ENCODE measurements at regions of chr6 and their contacts with region 1.

Region 1: GRCh38 chr6:41306187-41306854 is 19.8 kb upstream of the TREM1 start:
- DNase-seq: peak; percentile 73
- H3K4me3 Mint-ChIP-seq: no peak overlapping the region
- H3K27ac Mint-ChIP-seq: no peak overlapping the region
- H3K4me1 Mint-ChIP-seq: peaks cover 18% of the 10 kb centered on the region
- H3K27me3 Mint-ChIP-seq: no peaks in the 10 kb centered on the region

Region 2: GRCh38 chr6:40807484-40807883 is 498.8 kb before region 1 on chr6:
- CTCF ChIA-PET with region 1: no interaction called
- intact Hi-C with region 1: no loop called
- DNase-seq: no peak
- H3K4me3 Mint-ChIP-seq: no peak overlapping the region
- H3K27ac Mint-ChIP-seq: no peak overlapping the region
- H3K4me1 Mint-ChIP-seq: no peaks in the 10 kb centered on the region
- H3K27me3 Mint-ChIP-seq: no peaks in the 10 kb centered on the region

Region 3: DNA sequence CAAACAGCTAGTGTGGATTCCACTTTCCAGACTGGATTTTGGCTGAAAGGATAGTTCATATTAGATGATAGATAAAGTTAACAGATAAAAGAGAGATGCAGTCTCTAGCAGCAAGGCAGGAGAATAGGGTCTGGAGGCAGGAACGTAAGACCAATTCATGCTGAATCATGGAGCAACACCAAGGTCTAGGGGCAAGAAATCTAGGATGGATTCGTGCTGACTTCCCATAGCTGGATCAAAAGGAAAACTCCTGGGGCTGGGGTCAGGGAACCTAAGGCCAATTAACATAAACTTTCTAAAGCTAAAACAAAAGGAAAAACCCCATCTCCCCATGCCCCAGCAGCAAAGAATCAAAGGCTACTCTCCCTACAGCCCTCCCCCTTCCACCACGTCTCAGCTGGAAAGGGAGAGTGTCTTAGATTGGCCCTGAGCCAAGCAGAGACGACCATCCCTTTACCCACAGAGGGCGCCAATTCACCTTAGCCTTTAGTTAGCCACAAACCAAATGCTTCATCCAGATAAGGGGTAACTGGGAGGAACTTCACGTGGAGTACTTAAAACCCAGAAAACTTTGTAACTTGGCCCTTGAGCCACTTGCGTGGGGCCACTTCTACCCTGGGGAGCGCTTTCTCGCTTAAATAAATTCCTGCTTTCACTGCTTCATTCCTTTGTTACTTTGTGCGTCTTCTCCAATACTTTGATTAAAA is 27.5 kb before region 1 on chr6:
- CTCF ChIA-PET with region 1: interaction called, 23 read pairs
- intact Hi-C with region 1: loop called (anchors 1 kb)
- DNase-seq: peak; percentile 89
- H3K4me3 Mint-ChIP-seq: no peak overlapping the region
- H3K27ac Mint-ChIP-seq: peak overlapping the region; percentile 20
- H3K4me1 Mint-ChIP-seq: peaks cover 14% of the 10 kb centered on the region
- H3K27me3 Mint-ChIP-seq: no peaks in the 10 kb centered on the region

Region 4: DNA sequence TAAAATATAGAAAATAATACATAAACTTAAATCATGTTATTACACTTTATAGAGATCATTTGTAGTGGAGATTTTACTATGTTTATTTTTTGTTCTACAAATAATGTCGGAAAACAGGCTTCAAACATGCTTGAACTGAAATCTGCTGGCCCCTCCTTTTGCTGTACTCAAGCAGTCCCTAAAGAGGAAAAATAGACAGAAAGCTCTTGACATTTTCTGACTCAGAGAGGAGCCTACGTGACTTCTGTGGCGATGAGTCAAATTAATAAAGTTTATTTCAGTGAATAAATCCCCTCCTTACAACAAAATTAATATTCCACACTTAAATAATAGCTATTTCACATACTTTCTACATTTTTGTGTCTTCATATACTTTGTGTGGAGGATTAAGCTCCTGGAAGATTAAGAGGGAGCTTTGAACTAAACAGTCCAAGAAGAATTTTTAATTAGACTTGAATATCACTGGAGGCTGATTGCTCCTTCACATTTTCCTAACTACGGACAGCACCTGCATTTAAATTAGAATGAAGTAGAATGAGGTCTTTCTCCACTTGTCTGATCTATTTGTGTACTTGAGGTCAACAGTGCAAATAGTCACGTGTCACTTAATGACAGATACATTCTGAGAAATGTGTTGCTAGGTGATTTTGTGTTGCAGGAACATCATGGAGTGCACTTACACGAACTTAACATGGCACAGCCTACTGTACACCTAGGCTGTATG is 18.1 kb before region 1 on chr6:
- CTCF ChIA-PET with region 1: interaction called, 7 read pairs
- intact Hi-C with region 1: loop called (anchors 2 kb)
- DNase-seq: peak; percentile 24
- H3K4me3 Mint-ChIP-seq: no peak overlapping the region
- H3K27ac Mint-ChIP-seq: peak overlapping the region; percentile 86
- H3K4me1 Mint-ChIP-seq: peaks cover 23% of the 10 kb centered on the region
- H3K27me3 Mint-ChIP-seq: no peaks in the 10 kb centered on the region

Region 5: GRCh38 chr6:41334482-41335040 is 28.2 kb after region 1 on chr6:
- CTCF ChIA-PET with region 1: interaction called, 14 read pairs
- intact Hi-C with region 1: no loop called
- DNase-seq: peak; percentile 30
- H3K4me3 Mint-ChIP-seq: no peak overlapping the region
- H3K27ac Mint-ChIP-seq: peak overlapping the region; percentile 78
- H3K4me1 Mint-ChIP-seq: peaks cover 46% of the 10 kb centered on the region
- H3K27me3 Mint-ChIP-seq: no peaks in the 10 kb centered on the region

Region 6: GRCh38 chr6:41392246-41392645 is 85.9 kb after region 1 on chr6:
- CTCF ChIA-PET with region 1: no interaction called
- intact Hi-C with region 1: no loop called
- DNase-seq: no peak
- H3K4me3 Mint-ChIP-seq: no peak overlapping the region
- H3K27ac Mint-ChIP-seq: no peak overlapping the region
- H3K4me1 Mint-ChIP-seq: no peaks in the 10 kb centered on the region
- H3K27me3 Mint-ChIP-seq: peaks cover 16% of the 10 kb centered on the region

Region 7: DNA sequence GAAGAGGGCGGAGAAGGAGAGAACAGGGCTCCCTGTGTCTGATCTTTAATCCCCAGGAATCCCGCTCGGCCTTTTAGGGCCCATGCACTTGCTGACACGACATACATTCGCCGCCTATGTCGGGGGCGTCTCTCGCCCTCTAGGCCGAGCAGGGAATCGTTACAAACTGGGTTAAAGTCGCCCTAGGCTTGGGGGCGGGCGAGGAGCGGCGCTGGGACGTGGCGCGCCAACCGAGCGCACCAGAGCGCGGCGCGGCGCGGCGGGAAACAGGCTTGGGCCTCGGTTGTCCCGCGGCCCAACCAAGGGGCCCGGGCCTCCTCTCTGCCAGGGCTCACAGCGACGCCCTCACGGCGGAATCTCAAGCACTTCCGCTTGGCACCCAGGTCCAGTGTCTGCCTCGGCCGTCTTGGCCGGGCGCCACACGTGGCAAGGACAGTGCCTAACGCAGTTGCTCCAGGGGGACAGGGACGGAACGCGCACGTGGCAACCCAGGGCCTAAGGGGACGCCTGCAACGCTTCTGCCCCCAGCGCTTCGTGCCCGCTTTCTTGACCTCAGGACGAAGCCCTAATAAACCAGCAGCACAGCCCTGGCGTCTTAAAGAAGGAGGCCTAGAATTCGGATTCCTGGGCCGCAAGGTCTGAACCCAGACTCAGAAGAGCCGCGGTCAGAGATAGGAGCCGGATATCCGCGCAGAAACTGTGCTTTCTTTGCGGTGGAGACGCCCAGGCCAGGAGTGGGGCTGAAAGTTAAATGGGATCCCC is 100.6 kb after region 1 on chr6:
- CTCF ChIA-PET with region 1: no interaction called
- intact Hi-C with region 1: no loop called
- DNase-seq: no peak
- H3K4me3 Mint-ChIP-seq: no peak overlapping the region
- H3K27ac Mint-ChIP-seq: no peak overlapping the region
- H3K4me1 Mint-ChIP-seq: no peaks in the 10 kb centered on the region
- H3K27me3 Mint-ChIP-seq: peaks cover 10% of the 10 kb centered on the region

Region 8: GRCh38 chr6:41568585-41569384 is 262.5 kb after region 1 on chr6:
- CTCF ChIA-PET with region 1: no interaction called
- intact Hi-C with region 1: no loop called
- DNase-seq: no peak
- H3K4me3 Mint-ChIP-seq: no peak overlapping the region
- H3K27ac Mint-ChIP-seq: no peak overlapping the region
- H3K4me1 Mint-ChIP-seq: peaks cover 16% of the 10 kb centered on the region
- H3K27me3 Mint-ChIP-seq: no peaks in the 10 kb centered on the region

Region 9: GRCh38 chr6:41591859-41592502 is 285.7 kb after region 1 on chr6:
- CTCF ChIA-PET with region 1: no interaction called
- intact Hi-C with region 1: loop called (anchors 5 kb)
- DNase-seq: peak; percentile 89
- H3K4me3 Mint-ChIP-seq: no peak overlapping the region
- H3K27ac Mint-ChIP-seq: no peak overlapping the region
- H3K4me1 Mint-ChIP-seq: no peaks in the 10 kb centered on the region
- H3K27me3 Mint-ChIP-seq: no peaks in the 10 kb centered on the region

Measured in activated naive CD4-positive, alpha-beta T cell treated with anti-CD3 and anti-CD28 coated beads for 36 hours (primary cell).